GM10248 (cell line): ENCODE measurements at regions of chr11 and their contacts with region 1.

Region 1: GRCh38 chr11:120235024-120235861 is 4.7 kb upstream of the POU2F3 start:
- DNase-seq: peak; percentile 83
- CTCF ChIP-seq: peak; percentile 93

Region 2: GRCh38 chr11:120182790-120183491 is 52.3 kb before region 1 on chr11:
- CTCF ChIA-PET with region 1: interaction called, 20 read pairs
- POLR2A ChIA-PET with region 1: no interaction called
- DNase-seq: no peak
- CTCF ChIP-seq: peak; percentile 38

Region 3: GRCh38 chr11:120248551-120249278 is 13.5 kb after region 1 on chr11:
- CTCF ChIA-PET with region 1: interaction called, 144 read pairs
- POLR2A ChIA-PET with region 1: no interaction called
- DNase-seq: no peak
- CTCF ChIP-seq: no peak

Region 4: DNA sequence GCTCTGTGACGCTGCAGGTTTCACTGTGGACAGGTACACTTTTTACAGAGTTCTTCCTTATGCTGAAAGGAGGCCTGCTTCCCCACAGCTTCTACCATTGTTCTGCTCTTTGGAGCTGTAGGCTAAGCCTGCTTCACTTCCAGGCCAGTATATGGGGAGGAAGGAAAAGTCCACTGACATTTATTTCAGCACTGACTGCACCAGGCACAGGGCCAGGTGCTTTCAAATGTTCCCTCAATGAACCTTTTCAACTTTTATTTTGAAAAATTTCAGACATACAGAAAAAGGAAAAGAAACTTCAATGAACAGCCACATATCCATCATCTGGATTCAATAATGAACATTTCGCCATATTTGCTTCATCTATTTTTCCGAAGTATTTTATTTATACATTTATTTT is 26.7 kb after region 1 on chr11:
- CTCF ChIA-PET with region 1: interaction called, 20 read pairs
- POLR2A ChIA-PET with region 1: no interaction called
- DNase-seq: no peak
- CTCF ChIP-seq: no peak

Region 5: DNA sequence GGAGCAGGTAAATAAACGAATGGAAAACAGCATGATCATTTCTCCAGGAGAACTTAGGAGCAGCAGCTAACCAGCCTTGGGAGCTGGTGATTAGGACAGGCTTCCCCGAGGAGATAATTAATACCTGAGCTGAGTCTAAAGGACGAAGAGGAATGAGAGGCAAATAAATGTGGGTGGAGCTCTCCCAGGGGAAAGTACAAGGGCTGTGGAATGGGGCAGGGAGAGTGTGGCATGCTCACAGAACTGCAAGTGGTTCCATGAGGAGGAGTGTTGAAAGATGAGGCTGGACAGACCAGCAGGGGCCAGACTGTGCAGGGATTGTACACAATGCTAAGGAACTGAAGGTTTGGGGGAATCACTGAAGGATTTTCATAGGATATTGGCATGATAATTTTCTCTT is 75.6 kb after region 1 on chr11:
- CTCF ChIA-PET with region 1: interaction called, 792 read pairs
- POLR2A ChIA-PET with region 1: no interaction called
- DNase-seq: no peak
- CTCF ChIP-seq: no peak